Dendritic cell treated with granulocyte-macrophage colony-stimulating factor and Interleukin-4, amounts not matched to agents 40 ng/mL and 50 ng/mL, for 4 days (primary cell): ENCODE measurements at regions of chr2 and their contacts with region 1.

Region 1: DNA sequence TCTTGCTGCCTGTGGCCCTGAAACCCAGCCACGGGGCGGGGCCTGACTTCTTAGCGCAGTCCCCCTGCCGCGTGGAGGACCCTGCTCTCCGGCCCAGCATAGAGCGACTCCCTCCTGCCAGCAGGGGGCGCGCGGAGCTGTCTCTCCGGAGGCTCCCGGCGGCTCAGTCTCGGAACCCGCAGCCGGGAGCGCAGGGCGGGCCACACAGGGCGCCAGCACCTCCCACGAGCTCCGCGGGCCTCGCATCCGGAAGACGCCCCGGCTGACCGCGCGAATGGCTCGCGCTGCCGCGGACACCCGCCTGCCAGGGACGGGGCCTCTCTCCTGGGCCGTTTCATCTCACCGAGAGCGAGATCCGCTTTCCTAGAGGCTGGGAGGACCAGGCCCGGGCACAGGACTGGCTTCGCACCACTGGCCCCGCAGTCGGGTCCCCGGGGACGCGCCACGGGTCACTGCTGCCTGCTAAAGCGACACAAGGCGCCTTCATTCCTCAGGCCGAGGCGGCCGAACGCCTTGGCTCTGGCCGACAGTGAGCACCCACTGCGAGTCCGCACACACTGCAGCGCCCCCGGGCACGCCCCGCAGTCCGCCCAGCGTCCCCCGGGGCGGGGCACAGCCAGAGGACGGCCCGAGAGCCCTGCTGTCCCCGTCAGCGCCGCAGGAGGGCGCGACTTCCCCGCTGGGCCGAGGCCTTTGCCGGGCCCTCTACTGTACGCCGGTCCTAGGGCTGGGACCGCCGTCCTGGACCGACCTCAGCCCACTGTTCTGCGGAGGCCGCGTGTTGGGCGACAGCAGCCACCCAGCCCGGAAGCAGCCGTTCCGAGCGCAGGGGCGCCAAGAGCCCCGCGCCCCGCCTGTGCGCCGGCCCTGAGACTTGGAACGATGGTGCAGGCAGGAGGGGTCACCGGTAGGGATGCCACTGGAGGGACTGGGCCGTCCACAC is 39.0 kb upstream of the ARHGEF4 start:
- H3K4me3 Mint-ChIP-seq: peak overlapping the region; percentile 76
- H3K27ac Mint-ChIP-seq: peak overlapping the region; percentile 82
- H3K4me1 Mint-ChIP-seq: peaks cover 6% of the 10 kb centered on the region
- H3K27me3 Mint-ChIP-seq: peaks cover 31% of the 10 kb centered on the region

Region 2: GRCh38 chr2:130727286-130728018 is 70.3 kb before region 1 on chr2:
- intact Hi-C with region 1: loop called (anchors 10 kb)
- H3K4me3 Mint-ChIP-seq: peak overlapping the region; percentile 74
- H3K27ac Mint-ChIP-seq: peak overlapping the region; percentile 25
- H3K4me1 Mint-ChIP-seq: peaks cover 11% of the 10 kb centered on the region
- H3K27me3 Mint-ChIP-seq: peaks cover 21% of the 10 kb centered on the region

Region 3: GRCh38 chr2:130873700-130874346 is 76.1 kb after region 1 on chr2:
- intact Hi-C with region 1: loop called (anchors 1 kb)
- H3K4me3 Mint-ChIP-seq: no peak overlapping the region
- H3K27ac Mint-ChIP-seq: no peak overlapping the region
- H3K4me1 Mint-ChIP-seq: no peaks in the 10 kb centered on the region
- H3K27me3 Mint-ChIP-seq: no peaks in the 10 kb centered on the region

Region 4: DNA sequence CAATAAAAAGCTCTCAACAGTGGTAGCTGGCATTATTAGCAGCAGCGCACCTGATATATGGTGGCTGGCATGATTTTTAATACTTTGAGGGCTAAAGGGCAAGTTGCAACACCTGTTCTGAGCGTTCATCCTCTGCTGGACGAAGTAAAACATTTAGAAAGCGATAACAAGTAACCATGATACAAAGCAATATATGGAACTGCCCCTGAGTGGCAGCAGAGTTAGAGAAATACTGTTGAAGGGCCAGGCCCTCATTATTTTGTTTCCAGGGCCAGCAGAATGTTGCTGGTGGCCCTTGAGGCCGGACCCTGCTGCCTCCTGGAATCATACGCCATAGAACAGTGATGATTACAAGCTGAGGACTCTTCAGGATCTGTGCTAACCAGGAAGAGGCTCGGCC is 86.7 kb after region 1 on chr2:
- intact Hi-C with region 1: no loop called
- H3K4me3 Mint-ChIP-seq: no peak overlapping the region
- H3K27ac Mint-ChIP-seq: no peak overlapping the region
- H3K4me1 Mint-ChIP-seq: no peaks in the 10 kb centered on the region
- H3K27me3 Mint-ChIP-seq: peaks cover 1% of the 10 kb centered on the region

Region 5: GRCh38 chr2:130920415-130921163 is 122.8 kb after region 1 on chr2:
- intact Hi-C with region 1: loop called (anchors 1 kb)
- H3K4me3 Mint-ChIP-seq: no peak overlapping the region
- H3K27ac Mint-ChIP-seq: no peak overlapping the region
- H3K4me1 Mint-ChIP-seq: no peaks in the 10 kb centered on the region
- H3K27me3 Mint-ChIP-seq: peaks cover 23% of the 10 kb centered on the region